Activated B cell treated with CpG ODN at 0.5 μM for 24 hours (primary cell): ENCODE measurements at regions of chr7 and their contacts with region 1.

Region 1: GRCh38 chr7:98878365-98879165 is at the start of gene TRRAP:
- DNase-seq: peak; percentile 80
- ATAC-seq: peak; percentile 81
- H3K4me3 Mint-ChIP-seq: peak within 1 kb of the TSS; percentile 91
- H3K27ac Mint-ChIP-seq: peak within 1 kb of the TSS; percentile 93
- H3K4me1 Mint-ChIP-seq: peaks cover 19% of the 10 kb centered on the region
- H3K27me3 Mint-ChIP-seq: peaks cover 3% of the 10 kb centered on the region
- CTCF ChIP-seq: peak; percentile 82
- total RNA-seq, gene TRRAP: 73.9 and 77.9 TPM in 2 replicates

Region 2: DNA sequence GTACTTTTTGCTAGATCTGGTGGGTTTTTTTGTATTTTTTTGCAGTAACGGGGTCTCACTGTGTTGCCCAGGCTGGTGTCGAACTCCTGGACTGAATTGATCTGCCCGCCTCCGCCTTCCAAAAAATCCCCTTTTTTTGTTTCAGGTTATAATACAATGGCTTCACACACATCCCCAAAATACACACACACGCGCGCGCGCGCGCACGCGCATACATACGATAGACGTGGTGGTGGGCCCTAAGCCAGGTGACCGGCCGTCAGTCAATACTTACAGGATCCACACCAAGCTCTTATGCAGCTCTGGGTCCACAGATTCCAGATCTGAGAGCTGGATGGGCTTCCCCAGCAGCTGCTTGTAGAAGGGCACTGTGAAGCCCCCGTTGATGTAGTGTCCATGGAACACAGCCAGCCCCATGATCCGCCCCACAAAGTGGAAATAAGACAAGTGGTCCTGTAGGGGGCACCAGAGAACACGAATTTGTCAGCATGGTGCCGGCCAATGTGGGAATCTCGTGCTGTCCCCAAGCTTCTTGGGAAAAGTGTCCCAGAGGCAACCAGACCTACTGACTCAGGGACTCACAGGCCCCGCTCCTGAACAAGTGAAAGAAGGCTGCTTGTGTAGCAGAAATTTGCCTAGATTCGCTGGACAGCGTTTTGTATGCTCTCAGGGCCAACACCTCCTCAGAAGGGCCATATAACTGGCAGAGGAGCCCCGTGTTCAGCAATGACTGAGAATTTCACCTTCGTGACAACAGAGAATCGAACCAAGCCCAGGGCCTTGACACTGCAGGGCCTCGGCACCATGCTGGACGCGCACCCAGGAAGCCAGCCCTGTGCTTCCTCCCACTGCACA is 161.8 kb after region 1 on chr7:
- CTCF ChIA-PET with region 1: no interaction called
- POLR2A ChIA-PET with region 1: no interaction called
- intact Hi-C with region 1: no loop called
- DNase-seq: no peak
- ATAC-seq: peak; percentile 65
- H3K4me3 Mint-ChIP-seq: no peak overlapping the region
- H3K27ac Mint-ChIP-seq: no peak overlapping the region
- H3K4me1 Mint-ChIP-seq: no peaks in the 10 kb centered on the region
- H3K27me3 Mint-ChIP-seq: no peaks in the 10 kb centered on the region
- CTCF ChIP-seq: peak; percentile 44

Region 3: DNA sequence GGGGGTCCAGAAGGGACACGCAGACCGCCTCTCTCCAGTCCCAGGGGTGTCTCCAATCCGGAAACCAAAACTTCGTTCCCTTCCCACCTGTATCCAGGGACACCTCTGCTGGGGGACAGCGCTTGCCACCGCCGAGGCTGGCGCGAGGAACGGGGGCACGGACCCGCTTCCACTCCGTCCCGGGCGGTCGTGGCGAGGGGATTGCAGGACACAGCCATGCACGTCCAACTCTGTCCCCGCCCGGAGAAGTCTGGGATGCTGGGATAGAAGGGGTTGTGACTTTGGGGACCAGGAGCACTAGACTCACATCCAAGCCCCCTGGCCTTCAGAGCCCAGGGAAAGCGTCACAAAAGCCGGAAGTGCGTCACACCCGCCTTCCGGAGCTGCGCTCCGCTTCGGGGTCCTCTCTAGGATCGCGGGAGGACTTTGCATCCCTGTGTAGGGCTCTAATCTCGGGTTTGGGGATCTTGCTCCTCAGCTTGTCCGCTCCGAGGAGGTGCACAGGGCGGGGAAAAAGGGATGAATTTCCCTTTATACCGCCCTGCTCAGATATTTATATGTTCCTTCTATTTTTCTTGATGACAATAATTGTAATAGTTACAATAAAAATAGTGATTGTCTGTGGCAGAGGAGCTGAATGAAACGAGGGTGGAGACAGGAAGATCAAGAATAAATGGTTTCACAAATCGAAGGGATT is 673.4 kb after region 1 on chr7 and contains the start of gene FAM200A:
- CTCF ChIA-PET with region 1: no interaction called
- POLR2A ChIA-PET with region 1: no interaction called
- intact Hi-C with region 1: loop called (anchors 10 kb)
- DNase-seq: peak; percentile 78
- ATAC-seq: peak; percentile 98
- H3K4me3 Mint-ChIP-seq: peak within 1 kb of the TSS; percentile 91
- H3K27ac Mint-ChIP-seq: peak within 1 kb of the TSS; percentile 87
- H3K4me1 Mint-ChIP-seq: peaks cover 33% of the 10 kb centered on the region
- H3K27me3 Mint-ChIP-seq: no peaks in the 10 kb centered on the region
- CTCF ChIP-seq: no peak
- total RNA-seq, gene FAM200A: 9.2 and 9.3 TPM in 2 replicates